Activated CD4-positive, alpha-beta T cell treated with anti-CD3 and anti-CD28 coated beads, Interleukin-2, amount 10 ng/mL, durations not matched to agents 7 days and 5 days (primary cell): ENCODE measurements at regions of chrX and their contacts with region 1.

Region 1: GRCh38 chrX:152941328-152942106 is 43.6 kb downstream of the ZNF185 start:
- DNase-seq: peak; percentile 89
- H3K4me3 Mint-ChIP-seq: peak overlapping the region; percentile 70
- H3K27ac Mint-ChIP-seq: peak overlapping the region; percentile 82
- H3K4me1 Mint-ChIP-seq: peaks cover 7% of the 10 kb centered on the region
- H3K27me3 Mint-ChIP-seq: no peaks in the 10 kb centered on the region

Region 2: GRCh38 chrX:152806035-152806434 is 135.5 kb before region 1 on chrX:
- CTCF ChIA-PET with region 1: no interaction called
- POLR2A ChIA-PET with region 1: no interaction called
- DNase-seq: no peak
- H3K4me3 Mint-ChIP-seq: no peak overlapping the region
- H3K27ac Mint-ChIP-seq: no peak overlapping the region
- H3K4me1 Mint-ChIP-seq: no peaks in the 10 kb centered on the region
- H3K27me3 Mint-ChIP-seq: peaks cover 7% of the 10 kb centered on the region

Region 3: GRCh38 chrX:152923599-152923998 is 17.9 kb before region 1 on chrX:
- CTCF ChIA-PET with region 1: interaction called, 10 read pairs
- POLR2A ChIA-PET with region 1: no interaction called
- DNase-seq: no peak
- H3K4me3 Mint-ChIP-seq: no peak overlapping the region
- H3K27ac Mint-ChIP-seq: peak overlapping the region; percentile 22
- H3K4me1 Mint-ChIP-seq: peaks cover 5% of the 10 kb centered on the region
- H3K27me3 Mint-ChIP-seq: no peaks in the 10 kb centered on the region

Region 4: DNA sequence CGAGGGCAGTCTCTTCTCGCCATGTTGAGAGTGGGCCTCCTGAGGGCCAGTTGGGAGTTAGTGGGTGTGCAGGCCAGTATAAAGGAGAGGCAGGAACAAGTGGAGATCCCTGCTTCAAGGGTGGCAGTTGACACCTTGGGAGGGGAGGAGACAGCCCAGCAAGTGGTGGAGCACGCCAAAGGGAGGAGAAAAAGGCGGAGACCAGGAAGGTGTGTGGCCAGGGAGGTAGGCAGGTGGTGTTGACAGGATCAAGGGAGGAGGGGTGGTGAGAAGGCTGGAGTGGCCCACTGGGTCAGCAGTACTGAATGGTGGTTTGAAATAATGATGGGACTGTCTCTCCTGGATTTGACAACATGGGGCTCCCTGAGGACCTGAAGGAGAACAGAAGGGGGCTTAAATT is 11.0 kb before region 1 on chrX:
- CTCF ChIA-PET with region 1: interaction called, 11 read pairs
- POLR2A ChIA-PET with region 1: no interaction called
- DNase-seq: no peak
- H3K4me3 Mint-ChIP-seq: no peak overlapping the region
- H3K27ac Mint-ChIP-seq: no peak overlapping the region
- H3K4me1 Mint-ChIP-seq: peaks cover 5% of the 10 kb centered on the region
- H3K27me3 Mint-ChIP-seq: no peaks in the 10 kb centered on the region

Region 5: GRCh38 chrX:152958524-152959465 is 17.3 kb after region 1 on chrX:
- CTCF ChIA-PET with region 1: interaction called, 27 read pairs
- POLR2A ChIA-PET with region 1: no interaction called
- DNase-seq: peak; percentile 89
- H3K4me3 Mint-ChIP-seq: peak overlapping the region; percentile 58
- H3K27ac Mint-ChIP-seq: peak overlapping the region; percentile 80
- H3K4me1 Mint-ChIP-seq: peaks cover 12% of the 10 kb centered on the region
- H3K27me3 Mint-ChIP-seq: no peaks in the 10 kb centered on the region

Region 6: DNA sequence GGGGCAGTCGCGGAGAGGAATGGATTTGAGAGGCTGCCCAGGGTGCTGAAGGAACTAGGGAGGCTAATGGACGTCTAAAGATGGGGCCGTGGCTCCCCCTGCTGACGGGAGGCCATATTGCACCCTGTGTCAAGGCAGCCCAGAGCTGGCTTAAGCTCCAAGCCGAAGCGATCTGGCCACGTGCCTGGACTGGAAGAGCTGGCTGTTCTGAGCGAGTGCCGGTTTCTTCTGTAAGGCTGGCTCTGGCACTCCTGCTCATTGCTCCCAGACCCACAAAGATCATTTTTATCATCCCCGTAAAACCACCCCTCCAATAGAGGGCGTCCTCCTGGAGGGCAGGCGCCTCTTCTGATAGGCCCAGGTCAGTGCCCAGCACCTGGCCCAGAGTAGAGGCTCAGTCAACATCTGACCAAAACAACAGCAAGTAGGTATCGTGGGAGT is 726.5 kb after region 1 on chrX:
- CTCF ChIA-PET with region 1: interaction called, 12 read pairs
- POLR2A ChIA-PET with region 1: no interaction called
- DNase-seq: peak; percentile 76
- H3K4me3 Mint-ChIP-seq: peak overlapping the region; percentile 69
- H3K27ac Mint-ChIP-seq: peak overlapping the region; percentile 33
- H3K4me1 Mint-ChIP-seq: peaks cover 7% of the 10 kb centered on the region
- H3K27me3 Mint-ChIP-seq: peaks cover 22% of the 10 kb centered on the region